H1 (cell line): ENCODE measurements at regions of chr20 and their contacts with region 1.

Region 1: DNA sequence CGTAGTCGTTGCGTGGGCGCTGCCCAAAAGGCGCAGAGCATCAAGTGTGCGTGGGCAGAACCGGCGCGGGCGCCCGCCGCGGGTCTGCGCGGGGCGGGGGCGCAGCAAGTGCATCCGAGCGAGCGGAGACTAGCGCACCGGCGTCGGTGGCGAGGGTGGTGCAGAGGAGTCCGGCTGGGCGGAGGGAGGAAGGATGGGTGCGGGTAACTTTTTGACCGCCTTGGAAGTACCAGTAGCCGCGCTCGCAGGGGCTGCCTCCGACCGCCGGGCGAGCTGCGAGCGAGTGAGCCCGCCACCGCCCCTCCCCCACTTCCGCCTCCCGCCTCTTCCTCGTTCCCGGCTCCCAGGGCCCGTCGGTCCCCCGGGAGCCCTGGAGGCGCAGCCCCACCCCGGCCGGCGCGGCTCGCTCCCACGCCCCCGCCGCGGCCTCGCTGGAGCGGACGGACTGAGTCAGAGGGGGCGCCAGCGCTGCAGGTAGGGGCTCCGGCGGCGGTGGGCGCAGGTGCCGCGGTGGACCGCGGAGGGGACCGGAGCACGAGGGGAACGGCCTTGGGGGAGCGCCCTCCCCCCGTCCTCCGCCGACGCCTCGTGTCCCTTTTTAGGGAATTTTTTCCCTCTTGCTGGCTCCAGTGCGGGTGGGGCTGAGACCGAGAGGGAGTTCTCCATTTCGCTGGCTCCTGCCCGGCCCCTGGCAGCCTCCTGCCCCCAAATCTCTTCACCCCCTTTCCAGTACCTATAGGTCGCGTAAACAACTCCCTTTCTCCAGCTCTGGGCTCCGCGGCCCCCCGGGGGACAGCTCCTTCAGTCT is 1.6 kb upstream of the DBNDD2 start:
- DNase-seq: peak in 1 of 2 experiments; percentile 78
- H3K4me3 ChIP-seq: peak overlapping the region; percentile 82 to 86 (median 84)
- H3K27ac ChIP-seq: 0 out of 2 replicates have a peak overlapping the region, but pooled peaks have one; percentile 29
- H3K4me1 ChIP-seq: peaks cover 0 to 8% (median 3%) of the 10 kb centered on the region in 4 experiments; a peak in 4 of 7 replicates
- H3K27me3 ChIP-seq: peaks cover 2 to 20% (median 10%) of the 10 kb centered on the region in 4 experiments; a peak in 6 of 7 replicates
- CTCF ChIP-seq: no peak
- EP300 ChIP-seq: no peak
- POLR2A ChIP-seq: peak; percentile 36 to 60; a peak in 2 of 3 replicates
- RAD21 ChIP-seq: no peak

Region 2: GRCh38 chr20:45080867-45081624 is 325.4 kb before region 1 on chr20:
- CTCF ChIA-PET with region 1: no interaction called
- POLR2A ChIA-PET with region 1: no interaction called
- DNase-seq: no peak
- H3K4me3 ChIP-seq: no peak overlapping the region
- H3K27ac ChIP-seq: no peak overlapping the region
- H3K4me1 ChIP-seq: peaks cover 0 to 8% (median 2%) of the 10 kb centered on the region in 4 experiments; a peak in 2 of 7 replicates
- H3K27me3 ChIP-seq: no peaks in the 10 kb centered on the region
- CTCF ChIP-seq: peak in 1 of 3 experiments; percentile 3; a peak in 1 of 4 replicates
- EP300 ChIP-seq: no peak
- POLR2A ChIP-seq: no peak
- RAD21 ChIP-seq: no peak

Region 3: GRCh38 chr20:45282700-45283547 is 123.5 kb before region 1 on chr20:
- CTCF ChIA-PET with region 1: no interaction called
- POLR2A ChIA-PET with region 1: no interaction called
- DNase-seq: no peak
- H3K4me3 ChIP-seq: no peak overlapping the region
- H3K27ac ChIP-seq: no peak overlapping the region
- H3K4me1 ChIP-seq: no peaks in the 10 kb centered on the region
- H3K27me3 ChIP-seq: no peaks in the 10 kb centered on the region
- CTCF ChIP-seq: no peak
- EP300 ChIP-seq: no peak
- POLR2A ChIP-seq: no peak
- RAD21 ChIP-seq: no peak

Region 4: DNA sequence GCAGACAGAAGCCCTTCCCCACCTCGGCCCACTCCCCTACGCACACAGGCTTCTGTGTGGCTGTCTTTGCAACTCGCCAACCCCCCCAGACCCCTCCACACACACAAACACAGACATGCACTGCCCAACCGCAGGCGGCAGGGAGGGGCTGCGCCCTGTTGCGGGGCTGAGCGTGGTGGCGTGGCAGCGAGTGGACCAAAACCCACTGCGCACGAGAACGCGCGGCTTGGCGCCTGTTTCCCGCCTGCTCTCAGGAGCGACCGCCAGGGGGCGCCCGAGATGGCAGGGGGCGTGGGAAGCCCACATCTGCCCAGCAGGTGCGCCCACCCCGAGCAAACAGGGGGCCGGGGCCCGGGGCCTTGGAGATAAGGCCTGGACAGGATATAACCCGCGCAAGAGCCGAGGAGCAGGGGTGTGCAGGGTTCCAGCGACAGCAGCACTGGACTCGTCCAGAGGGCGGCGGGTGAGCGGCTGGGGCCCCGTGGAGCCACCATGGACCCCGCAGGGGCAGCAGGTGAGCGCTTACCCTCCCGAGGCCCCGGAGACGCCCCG is 100.0 kb before region 1 on chr20 and contains the start of gene RBPJL:
- CTCF ChIA-PET with region 1: no interaction called
- POLR2A ChIA-PET with region 1: no interaction called
- DNase-seq: peak in 1 of 2 experiments; percentile 91
- H3K4me3 ChIP-seq: peak within 1 kb of the TSS in 1 of 4 experiments; percentile 45; a peak in 2 of 8 replicates
- H3K27ac ChIP-seq: no peak within 1 kb of the TSS
- H3K4me1 ChIP-seq: peaks cover 0 to 14% (median 7%) of the 10 kb centered on the region in 4 experiments; a peak in 5 of 7 replicates
- H3K27me3 ChIP-seq: peaks cover 0 to 9% (median 2%) of the 10 kb centered on the region in 4 experiments; a peak in 5 of 7 replicates
- CTCF ChIP-seq: peak; percentile 90 to 95 (median 93)
- EP300 ChIP-seq: peak in 1 of 2 experiments; percentile 32; a peak in 1 of 3 replicates
- POLR2A ChIP-seq: no peak
- RAD21 ChIP-seq: peak in 1 of 2 experiments; percentile 39; a peak in 3 of 4 replicates
- total RNA-seq, gene RBPJL: 0.67 and 0.73 TPM in 2 replicates

Region 5: DNA sequence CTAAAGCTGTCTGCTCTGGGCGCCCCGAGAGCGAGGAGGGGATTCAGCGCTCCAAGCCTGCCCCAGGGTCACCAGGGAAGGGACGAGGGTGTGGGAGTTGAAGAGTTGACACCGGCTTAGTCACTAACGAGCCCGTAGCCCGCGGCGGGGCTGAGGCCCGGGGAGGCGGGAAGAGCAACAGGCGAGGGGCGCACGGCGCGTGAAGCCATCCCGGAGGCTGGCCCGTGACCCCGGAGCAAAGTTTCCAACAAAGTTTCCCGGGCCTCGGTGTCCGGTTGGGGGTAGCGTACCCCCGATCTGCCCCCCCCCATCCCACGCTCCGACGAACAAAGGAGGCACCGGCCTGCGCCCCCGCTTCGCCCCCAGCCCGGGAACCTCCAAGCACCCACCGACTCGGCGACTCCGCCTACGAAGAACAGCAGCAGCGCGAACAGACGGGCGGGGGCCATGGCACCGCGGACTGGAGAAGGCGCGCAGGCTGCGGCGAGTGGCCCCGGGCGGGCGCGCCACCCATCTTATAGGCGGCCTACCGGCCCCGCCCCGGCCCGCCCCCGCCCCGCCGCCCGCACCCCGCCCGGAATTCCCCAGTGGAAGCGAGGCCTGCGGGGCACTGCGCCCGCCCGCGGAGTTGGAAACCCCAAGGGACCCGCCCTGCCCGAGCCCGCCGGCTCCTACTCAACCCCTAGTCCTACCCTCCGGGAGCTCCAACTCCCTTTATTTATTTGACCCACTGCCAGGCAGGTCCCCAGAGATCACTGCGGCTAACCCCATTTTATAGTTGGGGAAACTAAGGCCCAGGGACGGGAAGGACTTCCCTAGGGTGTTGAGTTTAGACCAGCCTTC is 58.3 kb before region 1 on chr20 and contains the start of gene SDC4:
- CTCF ChIA-PET with region 1: no interaction called
- POLR2A ChIA-PET with region 1: interaction called, 11 read pairs
- DNase-seq: peak in 1 of 2 experiments; percentile 63
- H3K4me3 ChIP-seq: peak within 1 kb of the TSS; percentile 68 to 95 (median 72)
- H3K27ac ChIP-seq: peak within 1 kb of the TSS; percentile 10; the same call in 1 of the 2 replicates
- H3K4me1 ChIP-seq: peaks cover 26 to 45% (median 35%) of the 10 kb centered on the region in 4 experiments
- H3K27me3 ChIP-seq: no peaks in the 10 kb centered on the region
- CTCF ChIP-seq: no peak
- EP300 ChIP-seq: no peak
- POLR2A ChIP-seq: peak; percentile 96
- RAD21 ChIP-seq: no peak
- total RNA-seq, gene SDC4: 59.2 and 60.2 TPM in 2 replicates

Region 6: GRCh38 chr20:45392733-45393132 is 13.7 kb before region 1 on chr20:
- CTCF ChIA-PET with region 1: interaction called, 4 read pairs
- POLR2A ChIA-PET with region 1: interaction called, 10 read pairs
- DNase-seq: no peak
- H3K4me3 ChIP-seq: no peak overlapping the region
- H3K27ac ChIP-seq: no peak overlapping the region
- H3K4me1 ChIP-seq: no peaks in the 10 kb centered on the region
- H3K27me3 ChIP-seq: no peaks in the 10 kb centered on the region
- CTCF ChIP-seq: peak in 2 of 3 experiments; percentile 25 to 28; a peak in 2 of 4 replicates
- EP300 ChIP-seq: no peak
- POLR2A ChIP-seq: no peak
- RAD21 ChIP-seq: peak; percentile 28 to 44; a peak in 3 of 4 replicates